Caco-2 (cell line): ENCODE measurements at regions of chr7 and their contacts with region 1.

Region 1: GRCh38 chr7:148299350-148300276 is 291.0 kb upstream of the C7orf33 start:
- DNase-seq: peak; percentile 66 to 79
- H3K4me3 ChIP-seq: no peak overlapping the region
- H3K4me3 Mint-ChIP-seq: peak overlapping the region; percentile 28
- H3K27ac Mint-ChIP-seq: peak overlapping the region; percentile 76
- H3K4me1 ChIP-seq: peaks cover 33% of the 10 kb centered on the region
- H3K4me1 Mint-ChIP-seq: peaks cover 11% of the 10 kb centered on the region
- H3K27me3 ChIP-seq: no peaks in the 10 kb centered on the region
- H3K27me3 Mint-ChIP-seq: no peaks in the 10 kb centered on the region
- CTCF ChIP-seq: no peak

Region 2: GRCh38 chr7:148327383-148327782 is 27.8 kb after region 1 on chr7:
- CTCF ChIA-PET with region 1: no interaction called
- POLR2A ChIA-PET with region 1: no interaction called
- intact Hi-C with region 1: loop called (anchors 1 kb)
- DNase-seq: peak in 1 of 2 experiments; percentile 66
- H3K4me3 ChIP-seq: no peak overlapping the region
- H3K4me3 Mint-ChIP-seq: peak overlapping the region; percentile 44
- H3K27ac Mint-ChIP-seq: peak overlapping the region; percentile 83
- H3K4me1 ChIP-seq: peaks cover 22% of the 10 kb centered on the region
- H3K4me1 Mint-ChIP-seq: peaks cover 14% of the 10 kb centered on the region
- H3K27me3 ChIP-seq: no peaks in the 10 kb centered on the region
- H3K27me3 Mint-ChIP-seq: no peaks in the 10 kb centered on the region
- CTCF ChIP-seq: no peak

Region 3: DNA sequence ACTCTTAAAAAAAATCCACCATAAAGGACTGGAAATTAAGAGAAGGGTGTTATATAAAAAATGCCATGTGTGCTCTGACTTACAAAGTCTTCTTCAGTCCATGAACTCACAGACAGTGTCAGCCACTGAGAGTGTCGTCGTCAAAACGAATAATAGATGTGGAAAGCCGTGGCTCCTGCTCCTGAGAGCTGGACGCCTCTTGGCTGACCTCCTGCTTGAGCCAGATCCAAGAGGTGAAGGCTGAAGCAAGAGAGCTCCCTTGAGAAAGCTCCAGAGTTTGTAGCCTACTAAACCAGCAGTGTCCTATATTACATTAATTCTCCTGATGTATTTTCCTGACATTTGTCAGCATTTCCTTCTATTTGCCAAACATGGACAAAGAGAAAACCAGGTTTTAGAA is 56.7 kb after region 1 on chr7:
- CTCF ChIA-PET with region 1: no interaction called
- POLR2A ChIA-PET with region 1: no interaction called
- intact Hi-C with region 1: no loop called
- DNase-seq: no peak
- H3K4me3 ChIP-seq: no peak overlapping the region
- H3K4me3 Mint-ChIP-seq: no peak overlapping the region
- H3K27ac Mint-ChIP-seq: no peak overlapping the region
- H3K4me1 ChIP-seq: 0 out of 2 replicates have a peak, but pooled peaks cover 3% of the 10 kb centered on the region
- H3K4me1 Mint-ChIP-seq: no peaks in the 10 kb centered on the region
- H3K27me3 ChIP-seq: no peaks in the 10 kb centered on the region
- H3K27me3 Mint-ChIP-seq: no peaks in the 10 kb centered on the region
- CTCF ChIP-seq: no peak